CD4-positive, alpha-beta T cell (primary cell): ENCODE measurements at regions of chr6 and their contacts with region 1.

Region 1: GRCh38 chr6:169950558-169950957 is 199.1 kb downstream of the ERMARD start:
- DNase-seq: peak in 9 of 14 experiments; percentile 10 to 66 (median 36)
- ATAC-seq: no peak
- H3K4me3 ChIP-seq: no peak overlapping the region
- H3K4me3 Mint-ChIP-seq: no peak overlapping the region
- H3K27ac ChIP-seq: no peak overlapping the region
- H3K27ac Mint-ChIP-seq: no peak overlapping the region
- H3K4me1 ChIP-seq: no peaks in the 10 kb centered on the region
- H3K4me1 Mint-ChIP-seq: no peaks in the 10 kb centered on the region
- H3K27me3 ChIP-seq: no peaks in the 10 kb centered on the region
- H3K27me3 Mint-ChIP-seq: no peaks in the 10 kb centered on the region
- CTCF ChIP-seq: peak; percentile 52

Region 2: GRCh38 chr6:169695131-169695530 is 255.4 kb before region 1 on chr6:
- CTCF ChIA-PET with region 1: no interaction called
- POLR2A ChIA-PET with region 1: no interaction called
- intact Hi-C with region 1: loop called in 1 of 2 experiments (anchors 5 kb)
- DNase-seq: no peak
- ATAC-seq: no peak
- H3K4me3 ChIP-seq: no peak overlapping the region
- H3K4me3 Mint-ChIP-seq: no peak overlapping the region
- H3K27ac ChIP-seq: no peak overlapping the region
- H3K27ac Mint-ChIP-seq: no peak overlapping the region
- H3K4me1 ChIP-seq: peaks cover 4% of the 10 kb centered on the region
- H3K4me1 Mint-ChIP-seq: peaks cover 12% of the 10 kb centered on the region
- H3K27me3 ChIP-seq: no peaks in the 10 kb centered on the region
- H3K27me3 Mint-ChIP-seq: no peaks in the 10 kb centered on the region
- CTCF ChIP-seq: no peak

Region 3: DNA sequence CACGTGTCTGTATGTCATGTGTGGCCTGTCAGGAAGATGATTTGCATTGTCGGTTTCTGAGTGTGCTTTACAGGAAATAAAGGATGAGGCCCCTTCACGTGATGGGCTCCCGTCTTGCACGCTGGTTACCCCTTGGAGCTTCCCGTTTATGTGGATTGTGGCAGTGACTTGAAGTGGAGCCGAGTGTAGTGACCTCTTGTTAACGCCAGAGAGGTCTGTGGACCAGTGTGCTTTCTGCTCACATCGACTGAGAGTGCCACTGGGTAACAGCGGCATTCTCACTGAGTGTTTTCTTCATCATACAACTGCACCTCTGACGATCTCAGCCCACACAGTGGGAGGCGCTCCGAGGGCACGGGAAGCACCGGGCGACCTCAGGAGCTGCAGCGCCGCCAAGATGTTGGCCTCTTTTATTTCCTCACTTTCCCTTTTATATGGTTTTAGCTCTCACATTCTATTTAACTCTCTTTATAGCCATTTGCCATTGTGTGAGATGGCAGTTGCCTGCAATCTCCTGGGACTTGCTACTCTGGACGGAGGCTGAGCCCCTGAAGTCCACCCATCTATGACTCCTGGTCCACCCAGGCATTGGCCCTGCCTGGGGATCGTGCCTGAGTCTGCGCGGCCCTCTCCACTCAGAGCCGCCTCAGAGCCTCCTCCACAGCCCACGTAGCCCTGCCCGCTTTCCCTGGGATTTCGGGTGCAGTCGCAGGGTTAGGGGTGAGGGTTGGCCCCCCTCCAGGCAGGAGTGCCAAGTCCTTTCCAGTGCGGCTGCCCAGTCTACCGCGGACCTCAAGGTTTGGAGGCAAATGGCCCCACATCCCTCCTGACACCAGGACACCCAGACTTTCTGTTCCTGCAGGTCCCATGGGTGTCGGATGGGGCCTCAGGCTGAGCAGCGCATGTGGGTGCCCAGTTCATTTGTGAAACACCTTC is 39.8 kb after region 1 on chr6:
- CTCF ChIA-PET with region 1: no interaction called
- POLR2A ChIA-PET with region 1: no interaction called
- intact Hi-C with region 1: loop called in 1 of 2 experiments (anchors 5 kb)
- DNase-seq: peak in 12 of 14 experiments; percentile 10 to 79 (median 34)
- ATAC-seq: peak; percentile 95
- H3K4me3 ChIP-seq: peak overlapping the region; percentile 32
- H3K4me3 Mint-ChIP-seq: peak overlapping the region; percentile 83
- H3K27ac ChIP-seq: no peak overlapping the region
- H3K27ac Mint-ChIP-seq: peak overlapping the region; percentile 92
- H3K4me1 ChIP-seq: peaks cover 30% of the 10 kb centered on the region
- H3K4me1 Mint-ChIP-seq: peaks cover 33% of the 10 kb centered on the region
- H3K27me3 ChIP-seq: no peaks in the 10 kb centered on the region
- H3K27me3 Mint-ChIP-seq: no peaks in the 10 kb centered on the region
- CTCF ChIP-seq: peak; percentile 41